Caco-2 (cell line): ENCODE measurements at regions of chr4 and their contacts with region 1.

Region 1: DNA sequence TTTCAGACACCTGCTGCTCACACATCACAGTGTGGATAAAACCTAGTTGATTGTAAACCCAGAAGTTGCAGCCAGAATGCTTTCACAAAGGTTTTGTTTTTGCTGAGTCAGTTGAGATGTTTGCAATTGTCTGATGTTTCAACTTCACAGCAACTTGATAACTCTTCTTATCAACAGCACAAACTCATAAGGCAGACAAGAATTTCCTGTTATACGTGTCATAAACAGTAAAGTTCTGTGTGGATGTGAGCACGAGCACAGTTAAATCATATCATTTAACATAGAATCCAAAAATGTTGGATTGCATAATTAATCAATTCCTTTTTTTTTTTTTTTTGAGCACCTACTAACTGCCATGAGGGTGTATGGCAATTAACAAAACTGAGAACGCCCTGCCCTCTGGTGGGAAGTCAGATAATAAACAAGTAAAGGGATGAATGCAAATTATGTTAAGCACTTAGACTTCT is 512.2 kb downstream of the PDHA2 start:
- DNase-seq: peak in 1 of 2 experiments; percentile 47
- H3K4me3 ChIP-seq: no peak overlapping the region
- H3K4me3 Mint-ChIP-seq: no peak overlapping the region
- H3K27ac Mint-ChIP-seq: no peak overlapping the region
- H3K4me1 ChIP-seq: no peaks in the 10 kb centered on the region; the same call in 1 of the 2 replicates
- H3K4me1 Mint-ChIP-seq: no peaks in the 10 kb centered on the region
- H3K27me3 ChIP-seq: no peaks in the 10 kb centered on the region
- H3K27me3 Mint-ChIP-seq: no peaks in the 10 kb centered on the region
- CTCF ChIP-seq: peak; percentile 35 to 36

Region 2: DNA sequence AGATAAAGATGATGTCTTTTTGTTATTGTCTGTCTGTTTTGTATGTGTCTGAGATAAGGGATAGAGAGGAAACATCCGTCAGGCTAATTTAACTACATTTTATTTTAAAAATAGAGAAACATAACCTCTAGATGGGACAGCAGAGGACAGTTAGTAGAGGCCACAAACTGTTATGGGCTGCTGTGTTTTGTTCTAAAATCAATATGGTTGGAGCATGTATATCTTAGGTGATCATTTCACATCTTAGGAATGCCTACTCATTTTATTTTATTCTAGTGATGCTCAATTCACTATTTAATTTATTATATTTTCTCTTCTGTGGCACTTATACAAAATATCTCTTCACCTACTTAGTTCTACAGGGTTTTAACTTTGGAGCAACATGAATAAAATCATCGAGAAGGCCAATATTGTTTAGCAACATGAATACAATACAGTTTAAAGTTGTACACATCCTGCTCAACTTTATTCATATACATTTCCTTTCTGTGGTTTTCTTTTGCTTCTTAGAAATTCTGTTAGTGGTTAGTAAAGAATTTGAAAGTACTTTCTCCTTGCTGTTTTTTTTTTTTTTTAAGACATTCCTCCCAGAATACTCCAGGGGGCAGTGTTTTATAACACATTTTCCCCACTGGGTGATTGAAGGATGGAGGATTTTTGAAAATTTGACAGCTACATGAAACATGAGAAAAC is 1196.2 kb before region 1 on chr4:
- CTCF ChIA-PET with region 1: no interaction called
- POLR2A ChIA-PET with region 1: no interaction called
- intact Hi-C with region 1: loop called (anchors 1 kb)
- DNase-seq: peak in 1 of 2 experiments; percentile 32
- H3K4me3 ChIP-seq: no peak overlapping the region
- H3K4me3 Mint-ChIP-seq: no peak overlapping the region
- H3K27ac Mint-ChIP-seq: no peak overlapping the region
- H3K4me1 ChIP-seq: no peaks in the 10 kb centered on the region
- H3K4me1 Mint-ChIP-seq: no peaks in the 10 kb centered on the region
- H3K27me3 ChIP-seq: no peaks in the 10 kb centered on the region; the same call in 1 of the 2 replicates
- H3K27me3 Mint-ChIP-seq: no peaks in the 10 kb centered on the region
- CTCF ChIP-seq: peak; percentile 52 to 66

Region 3: DNA sequence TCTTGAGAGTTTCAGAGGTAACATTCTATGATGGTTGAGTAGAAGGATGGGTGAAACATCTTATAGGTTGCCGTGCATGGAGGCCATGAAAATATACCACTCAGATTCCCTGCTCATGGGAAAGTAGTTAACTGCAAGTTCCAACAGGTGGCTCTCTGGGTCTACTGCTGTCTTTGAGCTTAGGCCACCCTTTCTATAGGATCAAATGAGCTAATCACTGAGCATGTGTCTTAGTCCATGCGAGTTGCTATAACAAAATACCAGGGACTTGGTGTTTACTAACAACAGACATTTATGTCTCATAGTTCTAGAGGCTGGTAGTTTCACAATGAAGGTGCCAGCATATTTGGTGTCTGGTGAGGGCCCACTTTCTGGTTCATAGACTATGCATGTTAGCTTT is 658.5 kb before region 1 on chr4:
- CTCF ChIA-PET with region 1: no interaction called
- POLR2A ChIA-PET with region 1: no interaction called
- intact Hi-C with region 1: loop called (anchors 1 kb)
- DNase-seq: peak in 1 of 2 experiments; percentile 2
- H3K4me3 ChIP-seq: no peak overlapping the region
- H3K4me3 Mint-ChIP-seq: no peak overlapping the region
- H3K27ac Mint-ChIP-seq: no peak overlapping the region
- H3K4me1 ChIP-seq: no peaks in the 10 kb centered on the region
- H3K4me1 Mint-ChIP-seq: no peaks in the 10 kb centered on the region
- H3K27me3 ChIP-seq: no peaks in the 10 kb centered on the region
- H3K27me3 Mint-ChIP-seq: peaks cover 4% of the 10 kb centered on the region
- CTCF ChIP-seq: peak in 1 of 2 experiments; percentile 34

Region 4: GRCh38 chr4:95835672-95836071 is 516.4 kb before region 1 on chr4:
- CTCF ChIA-PET with region 1: no interaction called
- POLR2A ChIA-PET with region 1: no interaction called
- intact Hi-C with region 1: loop called (anchors 1 kb)
- DNase-seq: peak in 1 of 2 experiments; percentile 14
- H3K4me3 ChIP-seq: no peak overlapping the region
- H3K4me3 Mint-ChIP-seq: no peak overlapping the region
- H3K27ac Mint-ChIP-seq: no peak overlapping the region
- H3K4me1 ChIP-seq: no peaks in the 10 kb centered on the region
- H3K4me1 Mint-ChIP-seq: no peaks in the 10 kb centered on the region
- H3K27me3 ChIP-seq: no peaks in the 10 kb centered on the region
- H3K27me3 Mint-ChIP-seq: no peaks in the 10 kb centered on the region
- CTCF ChIP-seq: peak; percentile 50 to 56

Region 5: DNA sequence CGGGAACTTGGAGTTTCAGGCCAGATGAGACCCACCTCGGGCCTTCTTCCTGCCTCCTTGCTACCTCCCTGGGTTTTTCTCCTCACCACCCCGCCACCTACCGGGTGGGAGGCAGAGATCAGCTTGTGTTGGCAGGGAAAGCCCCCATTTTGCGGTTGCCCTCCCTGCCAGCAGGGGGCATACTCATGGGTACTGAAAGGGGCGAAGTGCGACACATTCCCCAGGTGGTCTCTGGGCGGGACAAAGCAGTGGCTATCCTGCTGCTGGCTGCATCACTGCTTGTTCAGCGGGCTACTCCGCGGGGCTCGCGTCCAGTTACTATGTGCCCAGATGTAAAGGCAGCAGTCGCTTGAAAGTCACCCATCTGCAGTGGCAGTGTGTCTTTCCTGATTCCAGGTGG is 181.9 kb before region 1 on chr4:
- CTCF ChIA-PET with region 1: no interaction called
- POLR2A ChIA-PET with region 1: no interaction called
- intact Hi-C with region 1: loop called (anchors 1 kb)
- DNase-seq: peak in 1 of 2 experiments; percentile 8
- H3K4me3 ChIP-seq: no peak overlapping the region
- H3K4me3 Mint-ChIP-seq: no peak overlapping the region
- H3K27ac Mint-ChIP-seq: no peak overlapping the region
- H3K4me1 ChIP-seq: no peaks in the 10 kb centered on the region
- H3K4me1 Mint-ChIP-seq: no peaks in the 10 kb centered on the region
- H3K27me3 ChIP-seq: no peaks in the 10 kb centered on the region
- H3K27me3 Mint-ChIP-seq: no peaks in the 10 kb centered on the region
- CTCF ChIP-seq: no peak

Region 6: GRCh38 chr4:96395747-96396146 is 43.7 kb after region 1 on chr4:
- CTCF ChIA-PET with region 1: no interaction called
- POLR2A ChIA-PET with region 1: no interaction called
- intact Hi-C with region 1: loop called (anchors 1 kb)
- DNase-seq: no peak
- H3K4me3 ChIP-seq: no peak overlapping the region
- H3K4me3 Mint-ChIP-seq: no peak overlapping the region
- H3K27ac Mint-ChIP-seq: no peak overlapping the region
- H3K4me1 ChIP-seq: no peaks in the 10 kb centered on the region
- H3K4me1 Mint-ChIP-seq: no peaks in the 10 kb centered on the region
- H3K27me3 ChIP-seq: no peaks in the 10 kb centered on the region
- H3K27me3 Mint-ChIP-seq: no peaks in the 10 kb centered on the region
- CTCF ChIP-seq: no peak